HepG2 (cell line): ENCODE measurements at regions of chr5 and their contacts with region 1.

Region 1: DNA sequence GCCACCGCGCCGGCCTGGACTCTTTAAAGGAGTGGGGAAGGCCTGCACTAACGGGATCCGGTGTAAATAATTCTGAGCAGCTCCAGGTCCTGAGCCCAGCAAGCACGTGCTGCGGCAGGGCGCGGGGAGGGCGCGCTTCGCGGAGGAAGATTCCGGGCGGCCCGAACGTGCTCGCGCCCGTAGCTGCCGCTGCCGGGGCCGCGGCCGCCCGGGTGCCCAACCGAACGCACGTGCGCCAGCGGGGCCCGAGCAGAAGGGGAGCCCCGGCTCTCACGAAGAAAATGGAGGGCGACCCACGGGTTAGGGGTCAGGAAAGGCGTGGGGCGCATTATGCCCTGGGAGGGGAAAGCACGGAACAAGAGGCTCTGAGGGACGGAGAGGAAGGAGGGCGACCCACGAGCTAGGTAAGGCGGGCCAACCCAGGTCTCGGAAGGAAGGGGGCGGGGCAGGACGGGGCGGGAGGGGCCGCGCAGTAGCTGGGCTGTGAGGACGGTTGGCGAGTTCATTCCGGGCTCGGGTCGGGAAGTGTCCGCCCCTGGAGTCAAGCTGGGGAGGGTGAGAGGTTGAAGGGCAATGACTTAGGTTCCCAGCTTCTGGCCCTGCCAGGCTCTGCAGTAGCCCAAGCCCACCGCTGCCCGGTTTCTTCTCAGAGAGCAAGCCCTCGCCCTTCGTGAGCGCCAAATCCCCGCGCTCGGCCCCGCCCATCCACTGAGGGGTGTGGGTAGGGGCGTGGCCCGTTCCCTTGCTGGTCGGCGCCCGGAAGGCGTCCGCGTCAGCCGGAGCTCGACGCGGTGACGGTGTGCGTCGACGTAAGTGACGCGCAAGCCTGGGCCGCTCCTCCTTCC is at the start of gene ZNF131:
- DNase-seq: peak; percentile 89
- ATAC-seq: peak; percentile 95
- H3K4me3 ChIP-seq: peak within 1 kb of the TSS; percentile 88 to 97 (median 92)
- H3K27ac ChIP-seq: peak within 1 kb of the TSS; percentile 98
- H3K4me1 ChIP-seq: peaks cover 45% of the 10 kb centered on the region
- H3K27me3 ChIP-seq: no peaks in the 10 kb centered on the region; a peak in 1 of 5 replicates
- CTCF ChIP-seq: no peak
- EP300 ChIP-seq: no peak
- POLR2A ChIP-seq: peak; percentile 76 to 94
- RAD21 ChIP-seq: no peak
- total RNA-seq, gene ZNF131: 30.4 and 33.3 TPM in 2 replicates

Region 2: DNA sequence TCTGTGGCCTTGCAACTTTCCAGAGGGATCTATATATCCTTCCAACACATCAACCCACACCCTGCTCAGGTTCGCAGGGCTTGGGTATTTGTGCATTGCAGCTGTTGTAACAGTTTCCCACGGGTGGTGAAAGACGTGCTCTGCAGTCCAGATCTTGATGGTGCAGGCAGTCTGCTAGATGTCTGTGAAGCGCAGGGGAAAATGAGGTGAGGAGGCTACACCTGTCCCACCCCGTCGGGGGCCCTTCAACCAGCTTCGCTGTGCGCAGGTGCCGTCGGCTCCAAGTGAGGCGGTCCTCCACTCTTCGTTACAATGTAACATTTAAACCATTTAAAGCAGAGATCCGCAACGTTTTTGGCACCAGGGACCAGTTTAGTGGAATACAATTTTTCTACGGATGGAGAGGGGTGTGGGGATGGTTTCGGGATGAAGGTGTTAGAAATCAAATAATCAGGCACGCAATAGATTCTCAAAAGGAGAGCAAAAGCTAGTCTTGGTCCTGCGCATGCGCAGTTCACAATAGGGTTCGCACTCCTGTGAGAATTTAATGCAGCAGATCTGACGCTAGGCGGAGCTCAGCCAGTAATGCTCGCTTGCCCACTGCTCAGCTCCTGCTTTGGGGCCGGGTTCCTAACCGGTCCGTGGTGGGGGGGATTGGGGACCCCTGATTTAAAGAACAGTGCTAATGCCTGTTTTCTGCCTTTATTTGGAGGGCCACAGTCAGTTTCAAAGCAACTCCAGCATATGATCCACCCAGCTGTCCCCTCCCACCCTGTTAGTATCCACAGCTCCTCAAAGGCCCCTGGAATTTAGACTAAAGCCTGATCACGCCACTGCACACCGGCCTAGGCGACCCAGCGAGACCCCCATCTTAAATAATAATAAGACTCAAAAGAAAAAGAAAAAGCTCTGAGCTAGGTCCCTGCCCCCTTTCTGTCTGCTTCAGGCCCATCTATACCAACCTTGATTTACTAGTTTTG is 212.1 kb before region 1 on chr5:
- CTCF ChIA-PET with region 1: no interaction called
- POLR2A ChIA-PET with region 1: interaction called, 13 read pairs
- in situ Hi-C with region 1: no loop called
- intact Hi-C with region 1: no loop called
- DNase-seq: peak; percentile 81
- ATAC-seq: peak; percentile 92
- H3K4me3 ChIP-seq: peak overlapping the region; percentile 25 to 67 (median 61)
- H3K27ac ChIP-seq: no peak overlapping the region
- H3K4me1 ChIP-seq: peaks cover 17% of the 10 kb centered on the region
- H3K27me3 ChIP-seq: no peaks in the 10 kb centered on the region
- CTCF ChIP-seq: peak; percentile 92
- EP300 ChIP-seq: no peak
- POLR2A ChIP-seq: no peak
- RAD21 ChIP-seq: peak; percentile 65; the same call in 1 of the 2 replicates

Region 3: DNA sequence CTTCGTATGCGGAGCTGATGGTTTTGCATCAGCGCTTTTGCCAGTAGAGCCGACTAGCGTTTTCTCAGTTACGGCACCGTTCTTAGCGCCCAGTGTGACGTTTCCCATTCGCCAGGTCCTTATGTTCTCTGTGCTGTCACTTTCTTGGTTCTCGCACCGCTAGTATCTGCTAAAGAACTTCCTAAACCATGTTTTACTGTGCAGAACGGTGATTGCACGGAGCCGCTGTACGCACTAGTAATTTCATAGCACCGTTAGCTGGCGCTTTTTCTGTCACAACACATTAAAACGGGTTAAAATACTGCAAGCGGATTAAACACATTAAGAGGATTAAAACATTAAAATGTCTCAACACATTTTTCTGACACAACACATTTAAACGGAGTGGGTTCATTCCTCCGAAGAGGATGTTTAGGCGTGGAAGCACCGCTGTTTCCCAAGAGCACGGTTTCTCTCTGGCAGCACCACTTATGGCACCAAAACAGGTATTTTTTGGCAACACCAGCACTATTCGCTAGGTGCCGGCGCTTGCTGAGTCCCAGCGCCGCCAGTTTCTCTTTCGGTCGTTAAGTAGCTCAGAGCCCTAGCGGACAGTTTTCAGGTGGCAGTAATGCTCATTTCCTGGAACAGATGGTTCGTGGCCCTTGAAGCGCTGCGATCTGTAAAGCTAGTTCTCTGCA is 101.2 kb before region 1 on chr5:
- CTCF ChIA-PET with region 1: no interaction called
- POLR2A ChIA-PET with region 1: interaction called, 32 read pairs
- in situ Hi-C with region 1: no loop called
- intact Hi-C with region 1: no loop called
- DNase-seq: peak; percentile 88
- ATAC-seq: peak; percentile 83
- H3K4me3 ChIP-seq: peak overlapping the region; percentile 69 to 86 (median 82)
- H3K27ac ChIP-seq: peak overlapping the region; percentile 92
- H3K4me1 ChIP-seq: peaks cover 39% of the 10 kb centered on the region
- H3K27me3 ChIP-seq: no peaks in the 10 kb centered on the region; a peak in 1 of 5 replicates
- CTCF ChIP-seq: peak; percentile 44
- EP300 ChIP-seq: no peak
- POLR2A ChIP-seq: no peak
- RAD21 ChIP-seq: no peak

Region 4: DNA sequence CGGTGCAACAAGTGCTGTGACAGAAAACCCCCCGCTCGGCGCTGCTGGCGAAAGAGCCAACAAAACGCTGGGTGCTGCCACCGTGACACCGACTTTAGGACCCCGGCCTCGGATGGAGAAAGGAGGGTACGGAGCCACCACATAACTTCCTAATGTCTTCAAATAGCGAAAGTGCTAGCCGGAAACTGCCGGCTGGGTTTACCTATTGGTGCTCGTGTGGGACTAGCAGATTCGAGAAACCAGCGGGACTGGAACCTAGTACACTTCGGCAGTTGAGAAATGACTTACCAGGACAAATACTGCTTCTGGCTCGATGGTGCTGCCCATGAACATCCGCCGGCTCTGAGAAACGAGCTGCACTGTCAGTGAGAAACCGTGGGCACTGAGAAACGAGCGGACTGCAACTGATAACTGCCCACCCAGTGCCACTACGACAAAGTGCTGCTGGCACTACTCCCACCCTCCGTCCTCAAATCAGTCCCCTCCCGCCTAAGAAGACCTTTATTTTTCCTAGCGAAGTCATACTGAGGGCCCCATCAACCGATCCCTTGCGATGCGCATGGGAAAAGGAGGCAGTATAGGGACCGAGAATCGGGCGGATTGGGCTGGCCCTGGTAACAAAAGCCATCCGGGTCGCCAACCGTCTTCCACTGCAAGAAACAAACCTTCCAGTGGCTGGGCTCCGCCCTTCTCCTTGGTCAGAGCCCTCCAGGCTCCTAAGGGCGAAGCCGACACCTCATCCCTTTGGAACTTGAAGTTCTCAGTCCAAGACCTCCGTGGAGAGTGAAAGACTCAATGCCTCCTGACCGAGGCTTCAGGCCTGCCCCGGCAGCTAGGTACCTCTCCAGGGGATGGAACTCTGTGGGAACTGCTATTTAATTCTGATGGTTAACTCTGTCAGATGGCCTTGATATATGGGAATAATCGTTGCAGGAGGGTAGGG is 53.9 kb before region 1 on chr5:
- CTCF ChIA-PET with region 1: no interaction called
- POLR2A ChIA-PET with region 1: interaction called, 26 read pairs
- in situ Hi-C with region 1: no loop called
- intact Hi-C with region 1: loop called (anchors 1 kb)
- DNase-seq: peak; percentile 87
- ATAC-seq: peak; percentile 83
- H3K4me3 ChIP-seq: peak overlapping the region; percentile 82 to 92 (median 83)
- H3K27ac ChIP-seq: peak overlapping the region; percentile 98
- H3K4me1 ChIP-seq: peaks cover 35% of the 10 kb centered on the region
- H3K27me3 ChIP-seq: no peaks in the 10 kb centered on the region; a peak in 1 of 5 replicates
- CTCF ChIP-seq: peak; percentile 21; the same call in 1 of the 2 replicates
- EP300 ChIP-seq: peak; percentile 38 to 84; a peak in 3 of 4 replicates
- POLR2A ChIP-seq: peak; percentile 15 to 35; a peak in 3 of 4 replicates
- RAD21 ChIP-seq: no peak

Region 5: DNA sequence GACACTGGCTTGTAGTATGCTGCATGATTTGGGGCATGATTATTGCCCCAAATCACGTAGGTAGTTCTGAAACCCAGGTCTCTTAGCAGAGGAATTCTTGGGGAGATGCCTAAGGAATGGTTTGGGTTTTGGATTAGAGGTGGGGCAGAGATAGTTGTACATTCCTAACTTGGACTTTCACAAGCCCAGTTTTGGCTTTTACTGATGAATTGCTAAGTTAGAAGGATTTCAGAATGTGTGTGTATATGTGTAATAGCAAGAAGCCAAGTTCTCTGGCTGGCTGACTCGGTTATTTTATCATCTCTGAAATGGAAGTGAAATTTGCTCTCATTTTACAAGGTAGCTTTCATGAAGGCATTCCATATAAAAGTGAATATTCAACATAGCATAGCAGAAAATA is 24.0 kb before region 1 on chr5:
- CTCF ChIA-PET with region 1: no interaction called
- POLR2A ChIA-PET with region 1: no interaction called
- in situ Hi-C with region 1: no loop called
- intact Hi-C with region 1: no loop called
- DNase-seq: no peak
- ATAC-seq: no peak
- H3K4me3 ChIP-seq: no peak overlapping the region
- H3K27ac ChIP-seq: no peak overlapping the region
- H3K4me1 ChIP-seq: no peaks in the 10 kb centered on the region
- H3K27me3 ChIP-seq: no peaks in the 10 kb centered on the region
- CTCF ChIP-seq: no peak
- EP300 ChIP-seq: no peak
- POLR2A ChIP-seq: no peak
- RAD21 ChIP-seq: no peak

Region 6: GRCh38 chr5:43110606-43111442 is 10.1 kb before region 1 on chr5:
- CTCF ChIA-PET with region 1: no interaction called
- POLR2A ChIA-PET with region 1: interaction called, 19 read pairs
- in situ Hi-C with region 1: no loop called
- intact Hi-C with region 1: no loop called
- DNase-seq: peak; percentile 43
- ATAC-seq: peak; percentile 98
- H3K4me3 ChIP-seq: no peak overlapping the region
- H3K27ac ChIP-seq: no peak overlapping the region
- H3K4me1 ChIP-seq: peaks cover 5% of the 10 kb centered on the region; the same call in 1 of the 2 replicates
- H3K27me3 ChIP-seq: no peaks in the 10 kb centered on the region
- CTCF ChIP-seq: peak; percentile 62
- EP300 ChIP-seq: no peak
- POLR2A ChIP-seq: no peak
- RAD21 ChIP-seq: no peak

Region 7: GRCh38 chr5:43256261-43256966 is 135.5 kb after region 1 on chr5:
- CTCF ChIA-PET with region 1: no interaction called
- POLR2A ChIA-PET with region 1: no interaction called
- in situ Hi-C with region 1: no loop called
- intact Hi-C with region 1: no loop called
- DNase-seq: no peak
- ATAC-seq: peak; percentile 62
- H3K4me3 ChIP-seq: no peak overlapping the region
- H3K27ac ChIP-seq: no peak overlapping the region
- H3K4me1 ChIP-seq: no peaks in the 10 kb centered on the region; the same call in 1 of the 2 replicates
- H3K27me3 ChIP-seq: peaks cover 0 to 5% of the 10 kb centered on the region in 2 experiments; a peak in 1 of 5 replicates
- CTCF ChIP-seq: no peak
- EP300 ChIP-seq: no peak
- POLR2A ChIP-seq: no peak
- RAD21 ChIP-seq: no peak

Region 8: DNA sequence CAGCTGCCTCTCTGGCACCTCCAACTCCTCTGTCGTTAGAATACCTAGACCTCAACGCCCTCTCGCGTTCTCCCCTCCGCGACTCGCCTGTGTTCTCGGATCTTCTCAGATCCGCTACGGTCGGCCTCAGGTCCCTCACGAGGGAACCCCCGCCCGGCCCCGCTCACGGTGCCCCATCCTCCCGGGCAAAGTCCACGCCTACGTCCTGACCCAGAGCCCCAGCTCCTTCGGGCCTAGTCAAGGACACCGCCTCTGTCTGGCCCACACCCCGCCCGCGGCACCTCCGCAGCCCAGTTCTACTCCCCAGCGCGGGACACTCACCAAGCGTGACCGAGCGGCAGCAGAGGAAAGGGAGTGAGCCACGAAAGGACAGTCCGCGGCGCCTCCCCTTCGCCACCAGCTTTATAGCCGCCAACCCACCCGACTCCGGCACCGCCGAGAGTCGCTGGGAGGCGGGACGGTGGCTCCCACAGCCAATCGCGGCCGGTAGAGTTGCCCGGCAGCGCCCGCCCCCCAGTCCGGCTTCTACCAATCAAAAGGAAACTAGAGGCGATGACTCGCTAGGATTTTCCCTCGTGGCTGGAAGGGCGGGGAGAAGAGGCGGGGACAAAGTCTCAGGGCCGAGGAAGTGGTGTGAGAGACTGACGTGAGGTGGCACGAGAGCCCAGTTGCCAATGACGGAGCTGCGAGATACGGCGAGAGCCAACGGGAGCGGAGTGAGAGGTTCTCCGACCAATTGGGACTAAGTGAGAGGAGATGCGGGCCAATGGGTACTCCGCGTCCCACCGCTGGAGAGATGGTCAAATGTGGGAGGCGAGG is 192.3 kb after region 1 on chr5 and contains the start of gene HMGCS1:
- CTCF ChIA-PET with region 1: no interaction called
- POLR2A ChIA-PET with region 1: interaction called, 34 read pairs
- in situ Hi-C with region 1: no loop called
- intact Hi-C with region 1: loop called (anchors 5 kb)
- DNase-seq: peak; percentile 98
- ATAC-seq: peak; percentile 96
- H3K4me3 ChIP-seq: peak within 1 kb of the TSS; percentile 88 to 98 (median 88)
- H3K27ac ChIP-seq: peak within 1 kb of the TSS; percentile 94
- H3K4me1 ChIP-seq: peaks cover 48% of the 10 kb centered on the region
- H3K27me3 ChIP-seq: no peaks in the 10 kb centered on the region; a peak in 1 of 5 replicates
- CTCF ChIP-seq: peak; percentile 22; the same call in 1 of the 2 replicates
- EP300 ChIP-seq: peak in 1 of 2 experiments; percentile 78; a peak in 2 of 4 replicates
- POLR2A ChIP-seq: peak; percentile 98 to 99
- RAD21 ChIP-seq: 0 out of 2 replicates have a peak, but pooled peaks have one; percentile 25
- total RNA-seq, gene HMGCS1: 318 and 569 TPM in 2 replicates

Region 9: GRCh38 chr5:43484106-43484849 is 363.3 kb after region 1 on chr5:
- CTCF ChIA-PET with region 1: no interaction called
- POLR2A ChIA-PET with region 1: interaction called, 39 read pairs
- in situ Hi-C with region 1: no loop called
- intact Hi-C with region 1: no loop called
- DNase-seq: peak; percentile 69
- ATAC-seq: peak; percentile 80
- H3K4me3 ChIP-seq: peak overlapping the region; percentile 76 to 81 (median 81)
- H3K27ac ChIP-seq: peak overlapping the region; percentile 91
- H3K4me1 ChIP-seq: peaks cover 42% of the 10 kb centered on the region
- H3K27me3 ChIP-seq: no peaks in the 10 kb centered on the region; a peak in 1 of 5 replicates
- CTCF ChIP-seq: peak; percentile 83
- EP300 ChIP-seq: no peak
- POLR2A ChIP-seq: no peak
- RAD21 ChIP-seq: peak; percentile 69